Activated CD4-positive, alpha-beta memory T cell treated with anti-CD3 and anti-CD28 coated beads for 36 hours (primary cell): ENCODE measurements at regions of chr6 and their contacts with region 1.

Region 1: GRCh38 chr6:49550492-49551077 is at the start of gene C6orf141:
- DNase-seq: peak; percentile 49
- H3K4me3 Mint-ChIP-seq: peak within 1 kb of the TSS; percentile 62
- H3K27ac Mint-ChIP-seq: no peak within 1 kb of the TSS
- H3K4me1 Mint-ChIP-seq: peaks cover 23% of the 10 kb centered on the region
- H3K27me3 Mint-ChIP-seq: peaks cover 29% of the 10 kb centered on the region
- total RNA-seq, gene C6orf141: 0.86 to 1.0 TPM

Region 2: DNA sequence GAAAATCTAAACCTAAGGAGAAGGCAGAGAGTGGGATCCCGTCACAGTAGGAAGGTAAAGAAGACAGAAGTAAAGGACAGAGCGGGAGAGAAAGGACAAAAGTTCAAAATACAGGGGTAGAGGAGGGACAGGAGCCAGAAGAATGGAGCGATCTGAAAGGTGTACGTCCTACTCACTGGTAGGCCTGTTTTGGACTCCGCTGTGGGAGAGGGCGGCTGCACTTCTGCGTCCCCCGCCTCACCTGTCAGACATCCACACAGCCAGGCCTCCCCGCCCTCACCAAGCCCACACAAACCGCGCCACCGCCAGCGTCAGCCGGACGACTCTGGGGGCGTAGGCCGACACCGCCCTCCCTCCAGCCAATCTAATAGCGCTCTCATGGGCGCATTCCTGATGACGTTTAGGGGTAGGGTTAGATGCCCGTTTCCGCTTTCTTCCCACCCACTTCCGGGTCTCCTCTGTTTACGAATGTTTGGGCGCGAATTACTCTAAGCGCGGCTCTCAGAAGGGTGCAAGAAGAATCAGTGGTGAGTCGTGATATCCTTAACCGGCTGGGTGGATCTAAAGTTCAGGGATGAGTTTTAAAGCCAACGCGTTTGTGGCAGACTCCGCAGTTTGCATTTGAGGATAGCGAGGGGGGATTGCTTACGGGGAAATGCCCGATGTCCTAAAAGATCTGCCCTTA is 87.5 kb before region 1 on chr6 and contains the starts of genes CENPQ and MMUT:
- CTCF ChIA-PET with region 1: no interaction called
- POLR2A ChIA-PET with region 1: no interaction called
- intact Hi-C with region 1: loop called (anchors 2 kb)
- DNase-seq: peak; percentile 95
- H3K4me3 Mint-ChIP-seq: peak within 1 kb of the TSS; percentile 97
- H3K27ac Mint-ChIP-seq: peak within 1 kb of the TSS; percentile 87
- H3K4me1 Mint-ChIP-seq: peaks cover 31% of the 10 kb centered on the region
- H3K27me3 Mint-ChIP-seq: no peaks in the 10 kb centered on the region
- total RNA-seq, gene CENPQ: 20.5 to 21.4 TPM
- total RNA-seq, gene MMUT: 16.9 to 18.1 TPM

Region 3: DNA sequence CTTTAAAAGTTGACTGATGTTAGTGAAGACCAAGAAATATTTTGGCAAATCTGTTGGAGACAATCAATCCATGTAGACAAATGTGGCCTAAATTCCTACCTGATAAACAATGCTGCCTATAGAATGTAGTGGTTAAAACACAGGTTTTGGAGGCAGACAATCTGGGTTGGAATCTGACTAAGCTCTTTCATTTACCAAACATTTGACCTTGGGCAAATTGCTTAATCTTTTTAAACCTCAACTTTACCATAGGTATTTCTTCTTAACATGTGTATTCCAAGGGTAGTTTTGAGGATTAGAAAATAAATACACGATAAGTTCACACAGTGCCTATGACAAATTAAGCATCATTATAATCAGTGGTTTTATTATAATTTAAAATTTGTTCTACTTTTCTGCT is 74.6 kb after region 1 on chr6:
- CTCF ChIA-PET with region 1: no interaction called
- POLR2A ChIA-PET with region 1: no interaction called
- intact Hi-C with region 1: no loop called
- DNase-seq: no peak
- H3K4me3 Mint-ChIP-seq: no peak overlapping the region
- H3K27ac Mint-ChIP-seq: no peak overlapping the region
- H3K4me1 Mint-ChIP-seq: no peaks in the 10 kb centered on the region
- H3K27me3 Mint-ChIP-seq: peaks cover 1% of the 10 kb centered on the region